ENCODE measurements at regions of chr7 and their contacts with region 1.

Region 1: DNA sequence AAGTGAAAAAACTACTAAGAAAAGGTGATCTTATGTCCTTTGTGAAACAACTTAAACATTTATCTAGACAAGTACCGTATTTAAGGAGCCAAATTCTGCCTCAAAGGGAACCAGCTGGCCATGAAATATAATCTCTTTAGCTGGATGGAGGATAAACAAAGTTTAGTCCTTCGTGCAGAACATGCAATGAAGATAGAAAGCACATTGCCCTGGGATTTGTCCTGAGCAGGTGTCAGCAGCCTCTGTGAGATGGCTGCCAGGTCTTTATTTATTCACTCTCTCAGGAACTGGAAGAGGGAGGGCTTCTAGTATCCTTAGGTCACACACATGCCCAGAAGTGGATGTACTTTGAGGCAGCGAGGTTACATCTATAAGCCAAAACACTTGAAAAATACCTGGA is 57.4 kb upstream of the CASD1 start:
- DNase-seq: no peak
- H3K4me3 ChIP-seq: no peak overlapping the region
- CTCF ChIP-seq: no peak
- POLR2A ChIP-seq: no peak

Region 2: GRCh38 chr7:94395141-94396036 is 56.9 kb before region 1 on chr7:
- intact Hi-C with region 1: no loop called
- DNase-seq: peak in 1 of 2 donors; percentile 70
- H3K4me3 ChIP-seq: peak overlapping the region; percentile 57
- CTCF ChIP-seq: peak in 1 of 3 donors; percentile 26
- POLR2A ChIP-seq: no peak

Region 3: DNA sequence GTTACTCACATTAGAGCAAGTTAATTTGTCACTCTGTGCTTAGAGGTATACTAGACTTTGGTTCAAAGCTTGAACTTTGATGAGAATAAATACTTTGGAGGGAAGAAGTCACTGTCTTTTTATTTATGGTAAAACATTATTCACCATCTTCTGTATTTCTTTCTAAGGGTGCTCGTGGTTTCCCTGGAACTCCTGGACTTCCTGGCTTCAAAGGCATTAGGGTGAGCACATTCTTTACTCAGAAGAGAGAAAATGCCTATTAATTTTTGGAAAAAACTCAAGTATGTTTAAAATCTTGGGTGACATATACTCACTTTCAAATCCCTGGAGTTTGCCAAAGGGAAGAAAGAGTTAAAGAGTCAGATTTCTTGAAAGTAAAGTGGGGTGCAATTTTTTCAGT is 46.7 kb before region 1 on chr7:
- intact Hi-C with region 1: no loop called
- DNase-seq: no peak
- H3K4me3 ChIP-seq: no peak overlapping the region
- CTCF ChIP-seq: no peak
- POLR2A ChIP-seq: no peak

Region 4: GRCh38 chr7:95476904-95477594 is 1024.8 kb after region 1 on chr7:
- intact Hi-C with region 1: loop called (anchors 10 kb)
- DNase-seq: peak in 1 of 2 donors; percentile 58
- H3K4me3 ChIP-seq: no peak overlapping the region
- CTCF ChIP-seq: no peak
- POLR2A ChIP-seq: no peak